ENCODE measurements at regions of chr3 and their contacts with region 1.

Region 1: DNA sequence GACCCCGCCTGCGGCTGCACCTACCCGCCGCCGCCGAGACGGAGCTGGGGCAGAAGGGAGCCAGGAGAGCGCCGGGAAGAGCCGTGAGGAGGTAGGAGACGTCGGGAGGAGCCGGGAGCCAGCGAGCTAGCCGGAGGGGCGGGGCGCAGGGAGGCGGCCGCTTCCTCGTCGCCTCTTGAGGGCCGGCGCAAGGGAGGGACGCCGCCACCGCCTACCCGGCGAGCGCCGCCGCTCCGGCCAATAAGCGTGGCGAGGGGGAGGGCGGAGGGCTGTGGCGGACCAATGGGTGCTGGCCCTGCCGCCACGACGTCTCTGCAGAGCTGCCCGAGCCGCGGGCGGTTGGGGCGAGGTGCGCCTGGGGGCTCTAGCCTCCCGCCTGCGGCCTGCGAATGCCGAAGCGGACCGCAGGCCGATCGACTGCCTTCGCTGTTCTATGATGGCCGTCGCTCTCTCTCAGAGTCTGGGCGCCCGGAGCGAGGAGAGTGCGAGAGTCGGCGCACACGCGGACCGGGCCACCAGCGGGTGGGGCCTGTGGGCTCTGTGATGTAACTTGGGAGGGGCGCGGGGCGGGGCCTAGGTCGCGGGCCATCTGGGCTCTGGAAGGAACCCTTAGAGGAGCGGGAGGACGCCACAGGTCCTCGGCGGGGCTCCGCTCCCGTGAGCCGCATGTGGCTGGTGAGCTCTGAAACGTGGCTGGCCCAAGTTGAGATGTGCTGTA is 72.7 kb upstream of the MAP4 start:
- H3K4me3 ChIP-seq: peak overlapping the region; percentile 83
- H3K27ac ChIP-seq: peak overlapping the region; percentile 86
- H3K4me1 ChIP-seq: peaks cover 2% of the 10 kb centered on the region; the same call in 1 of the 2 replicates
- CTCF ChIP-seq: no peak; the same call in 1 of the 2 replicates

Region 2: DNA sequence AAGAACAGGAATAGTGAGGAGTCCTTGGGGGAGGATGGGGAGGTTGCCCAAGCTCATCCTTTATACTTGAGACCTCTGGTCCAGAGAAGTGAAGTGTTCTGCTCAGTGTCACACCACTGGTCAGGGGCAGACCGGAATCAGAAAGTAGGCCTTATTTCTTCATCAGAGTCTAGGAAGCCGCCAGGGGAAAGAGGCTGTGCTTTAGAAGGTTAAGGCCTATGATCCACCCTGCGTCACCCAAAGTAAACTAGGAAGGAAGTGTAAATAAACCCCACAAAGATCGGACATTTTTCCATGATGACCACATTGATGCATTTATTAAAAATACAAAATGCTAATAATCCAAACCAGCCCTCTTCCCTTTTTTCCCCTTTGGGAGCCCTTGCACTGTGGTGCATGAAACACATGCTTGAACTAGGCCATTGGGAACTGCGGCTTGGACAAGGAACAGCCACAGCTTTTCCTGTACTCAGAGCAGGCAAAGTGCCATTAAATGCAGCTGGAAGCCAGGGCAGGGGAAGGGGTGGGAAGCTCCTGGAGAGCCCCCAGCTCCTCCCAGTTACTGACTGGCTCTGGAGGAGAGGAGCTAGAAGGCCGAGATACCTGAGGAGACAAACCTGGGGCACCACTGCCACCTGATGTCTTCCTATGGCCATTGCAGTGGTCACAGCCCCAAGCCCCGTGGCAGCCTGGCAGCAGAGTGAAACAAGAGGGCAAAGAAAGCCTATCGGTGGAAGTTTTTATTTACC is 62.3 kb after region 1 on chr3:
- CTCF ChIA-PET with region 1: interaction called, 5 read pairs
- POLR2A ChIA-PET with region 1: interaction called, 22 read pairs
- H3K4me3 ChIP-seq: no peak overlapping the region
- H3K27ac ChIP-seq: no peak overlapping the region
- H3K4me1 ChIP-seq: no peaks in the 10 kb centered on the region
- CTCF ChIP-seq: peak; percentile 79

Measured in HEK293 (cell line).